ENCODE measurements at regions of chr11 and their contacts with region 1.

Region 1: DNA sequence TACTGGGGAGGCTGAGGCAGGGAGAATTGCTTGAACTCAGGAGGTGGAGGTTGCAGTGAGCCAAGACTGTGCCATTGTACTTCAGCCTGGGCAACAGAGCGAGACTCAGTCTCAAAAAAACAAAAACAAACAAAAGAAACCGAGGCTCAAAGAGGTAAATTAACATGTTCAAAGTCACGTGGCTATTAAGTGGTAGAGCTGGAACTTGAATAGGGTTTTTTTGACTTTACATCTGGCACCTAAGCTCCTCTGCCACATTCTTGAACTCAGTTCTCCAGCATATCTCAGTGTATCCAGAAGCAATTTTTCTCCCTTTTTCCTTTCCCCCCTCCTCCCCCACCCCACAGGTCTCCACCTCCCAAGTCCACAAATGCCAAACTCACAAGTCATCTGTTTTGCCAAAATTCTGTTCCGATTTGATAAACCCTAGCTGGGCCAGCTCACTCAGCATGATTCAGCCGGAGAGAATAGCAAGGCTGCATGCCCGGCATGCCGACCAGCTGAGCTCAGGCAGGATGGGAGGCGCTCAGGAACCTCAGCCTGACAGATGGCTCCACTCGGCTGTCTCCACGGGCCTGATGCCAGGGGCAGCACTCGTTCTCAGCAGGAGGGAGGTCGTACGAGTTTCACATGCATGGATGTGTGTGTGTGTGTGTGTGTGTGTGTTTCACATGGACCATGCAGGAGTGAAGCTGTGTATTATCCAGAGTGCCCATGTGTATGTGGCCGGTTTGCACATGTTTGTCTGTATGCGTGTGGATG is 63.2 kb upstream of the RRAS2 start:
- DNase-seq: peak; percentile 98
- H3K4me3 ChIP-seq: no peak overlapping the region
- CTCF ChIP-seq: no peak

Region 2: GRCh38 chr11:14300661-14301304 is 121.5 kb before region 1 on chr11:
- CTCF ChIA-PET with region 1: interaction called, 18 read pairs
- POLR2A ChIA-PET with region 1: no interaction called
- DNase-seq: no peak
- H3K4me3 ChIP-seq: no peak overlapping the region
- CTCF ChIP-seq: peak; percentile 74

Region 3: GRCh38 chr11:14443638-14444037 is 21.4 kb after region 1 on chr11:
- CTCF ChIA-PET with region 1: interaction called, 7 read pairs
- POLR2A ChIA-PET with region 1: interaction called, 10 read pairs
- DNase-seq: no peak
- H3K4me3 ChIP-seq: no peak overlapping the region
- CTCF ChIP-seq: no peak

Region 4: DNA sequence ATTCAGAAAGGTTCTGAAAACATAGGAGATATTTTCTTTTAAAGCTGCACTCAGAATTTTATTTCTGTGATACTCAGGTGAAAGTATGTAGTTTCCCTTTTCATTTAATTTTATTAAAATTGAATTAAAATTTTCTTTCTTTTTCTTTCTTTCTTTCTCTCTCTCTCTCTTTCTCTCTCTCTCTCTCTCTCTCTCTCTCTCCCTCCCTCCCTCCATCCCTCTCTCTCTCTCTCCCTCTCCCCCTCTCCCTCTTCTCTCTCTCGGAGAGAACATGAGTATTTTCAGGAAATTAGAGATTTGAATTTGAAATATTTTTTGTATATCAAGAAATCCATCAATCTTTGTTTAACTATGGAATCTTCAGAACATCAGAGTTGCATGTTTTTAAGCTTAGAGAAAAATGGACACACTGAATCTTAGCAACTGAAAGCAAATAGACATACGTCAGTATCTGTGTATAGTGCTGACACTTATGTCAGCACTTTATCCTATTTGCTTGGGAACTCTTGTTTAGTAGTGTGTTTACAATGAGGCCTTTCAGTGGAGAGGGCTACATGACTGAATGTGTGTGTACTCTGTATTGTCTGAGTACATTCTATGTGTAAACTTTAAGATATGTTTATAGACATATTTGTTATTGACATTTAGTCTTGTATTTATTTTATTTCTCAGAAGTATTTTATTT is 265.9 kb after region 1 on chr11:
- CTCF ChIA-PET with region 1: no interaction called
- POLR2A ChIA-PET with region 1: no interaction called
- DNase-seq: no peak
- H3K4me3 ChIP-seq: no peak overlapping the region
- CTCF ChIP-seq: no peak